B cell (primary cell): ENCODE measurements at regions of chr14 and their contacts with region 1.

Region 1: GRCh38 chr14:22872033-22872832 is 693 bp downstream of the LRP10 start:
- DNase-seq: peak; percentile 83
- ATAC-seq: peak; percentile 22
- H3K4me3 ChIP-seq: peak overlapping the region; percentile 79 to 97 (median 92)
- H3K4me3 Mint-ChIP-seq: peak overlapping the region; percentile 96
- H3K27ac ChIP-seq: peak overlapping the region; percentile 84 to 88
- H3K27ac Mint-ChIP-seq: peak overlapping the region; percentile 98
- H3K4me1 ChIP-seq: peaks cover 19 to 35% of the 10 kb centered on the region in 2 donors
- H3K4me1 Mint-ChIP-seq: peaks cover 34% of the 10 kb centered on the region
- H3K27me3 ChIP-seq: no peaks in the 10 kb centered on the region
- H3K27me3 Mint-ChIP-seq: no peaks in the 10 kb centered on the region
- CTCF ChIP-seq: peak; percentile 90

Region 2: DNA sequence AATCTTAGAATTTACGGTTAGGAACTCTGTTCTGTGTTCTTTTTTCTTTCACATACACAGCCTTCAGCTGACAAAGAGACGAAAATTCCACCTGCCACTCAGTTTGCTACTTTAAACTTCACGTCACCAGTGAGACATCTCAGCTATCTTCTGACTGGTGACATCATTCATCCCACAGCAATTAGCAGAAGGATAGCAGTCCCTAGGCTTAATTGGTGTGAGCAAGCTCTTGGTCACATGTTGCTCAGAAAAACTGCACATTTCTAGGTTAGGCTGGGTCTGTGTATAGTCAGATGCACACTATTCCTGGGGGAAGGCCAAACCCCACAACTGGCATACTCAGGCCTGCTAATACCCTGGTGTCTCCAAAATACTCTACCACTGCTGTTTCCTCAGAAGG is 80.9 kb before region 1 on chr14:
- CTCF ChIA-PET with region 1: no interaction called
- POLR2A ChIA-PET with region 1: interaction called, 4 read pairs
- intact Hi-C with region 1: loop called (anchors 1 kb)
- DNase-seq: peak; percentile 31
- ATAC-seq: no peak
- H3K4me3 ChIP-seq: no peak overlapping the region
- H3K4me3 Mint-ChIP-seq: peak overlapping the region; percentile 43
- H3K27ac ChIP-seq: peak overlapping the region; percentile 75 to 84
- H3K27ac Mint-ChIP-seq: peak overlapping the region; percentile 78
- H3K4me1 ChIP-seq: peaks cover 43 to 51% of the 10 kb centered on the region in 2 donors
- H3K4me1 Mint-ChIP-seq: peaks cover 59% of the 10 kb centered on the region
- H3K27me3 ChIP-seq: no peaks in the 10 kb centered on the region
- H3K27me3 Mint-ChIP-seq: no peaks in the 10 kb centered on the region
- CTCF ChIP-seq: no peak

Region 3: DNA sequence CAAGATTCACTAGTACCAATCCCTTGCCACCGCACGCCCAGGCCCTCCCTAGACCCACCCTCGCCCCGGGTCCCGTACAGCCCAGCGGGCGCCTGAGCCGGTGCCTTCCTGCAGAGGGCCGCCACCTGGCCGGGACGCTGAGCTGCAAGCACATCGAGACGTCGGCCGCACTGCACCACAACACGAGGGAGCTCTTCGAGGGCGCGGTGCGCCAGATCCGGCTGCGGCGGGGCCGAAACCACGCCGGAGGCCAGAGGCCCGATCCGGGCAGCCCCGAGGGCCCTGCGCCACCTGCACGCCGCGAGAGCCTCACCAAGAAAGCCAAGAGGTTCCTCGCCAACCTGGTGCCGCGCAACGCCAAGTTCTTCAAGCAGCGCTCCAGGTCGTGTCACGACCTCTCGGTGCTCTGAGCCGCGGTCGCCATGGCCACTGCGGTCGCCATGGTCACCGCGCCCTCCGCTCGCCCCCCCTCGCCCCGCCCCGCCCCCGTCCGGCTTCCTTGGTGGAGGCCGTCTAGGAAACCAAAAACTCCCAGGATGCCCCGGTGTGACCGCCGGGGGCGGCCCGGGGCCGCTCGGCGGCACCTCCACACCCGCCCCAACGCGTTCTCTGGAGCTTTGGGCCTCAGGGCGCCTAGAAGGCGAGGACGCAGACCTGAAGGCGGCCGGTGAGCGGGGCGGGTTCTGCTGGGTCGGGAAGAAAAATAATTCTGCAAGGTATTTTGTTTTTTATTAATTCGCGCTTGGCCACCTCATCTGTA is 14.4 kb after region 1 on chr14:
- CTCF ChIA-PET with region 1: interaction called, 101 read pairs
- POLR2A ChIA-PET with region 1: interaction called, 61 read pairs
- intact Hi-C with region 1: loop called (anchors 1 kb)
- DNase-seq: peak; percentile 89
- ATAC-seq: peak; percentile 62
- H3K4me3 ChIP-seq: peak overlapping the region; percentile 44 to 83 (median 67)
- H3K4me3 Mint-ChIP-seq: peak overlapping the region; percentile 97
- H3K27ac ChIP-seq: peak overlapping the region; percentile 85 to 94
- H3K27ac Mint-ChIP-seq: peak overlapping the region; percentile 99
- H3K4me1 ChIP-seq: peaks cover 55 to 83% of the 10 kb centered on the region in 2 donors
- H3K4me1 Mint-ChIP-seq: peaks cover 71% of the 10 kb centered on the region
- H3K27me3 ChIP-seq: no peaks in the 10 kb centered on the region
- H3K27me3 Mint-ChIP-seq: no peaks in the 10 kb centered on the region
- CTCF ChIP-seq: peak; percentile 42

Region 4: DNA sequence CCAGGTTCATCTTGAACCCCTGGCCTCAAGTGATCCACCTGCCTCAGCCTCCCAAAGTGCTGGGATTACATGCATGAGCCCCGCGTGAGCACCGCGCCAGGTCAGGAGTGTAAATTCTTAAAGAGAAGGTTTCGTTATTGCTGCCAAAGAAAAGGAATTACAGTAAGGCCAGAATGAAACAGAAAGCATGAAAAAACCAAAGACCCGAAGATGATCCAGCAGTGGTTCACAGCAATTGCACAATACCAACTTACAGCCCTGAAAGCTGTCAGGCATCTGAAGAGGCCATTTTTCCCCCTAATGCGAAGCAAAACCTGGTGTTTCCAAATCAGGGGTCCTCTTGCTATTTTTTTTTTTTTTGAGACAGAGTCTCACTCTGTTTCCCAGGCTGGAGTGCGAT is 36.4 kb after region 1 on chr14:
- CTCF ChIA-PET with region 1: interaction called, 111 read pairs
- POLR2A ChIA-PET with region 1: no interaction called
- intact Hi-C with region 1: no loop called
- DNase-seq: no peak
- ATAC-seq: no peak
- H3K4me3 ChIP-seq: no peak overlapping the region
- H3K4me3 Mint-ChIP-seq: no peak overlapping the region
- H3K27ac ChIP-seq: no peak overlapping the region
- H3K27ac Mint-ChIP-seq: no peak overlapping the region
- H3K4me1 ChIP-seq: no peaks in the 10 kb centered on the region
- H3K4me1 Mint-ChIP-seq: peaks cover 12% of the 10 kb centered on the region
- H3K27me3 ChIP-seq: no peaks in the 10 kb centered on the region
- H3K27me3 Mint-ChIP-seq: no peaks in the 10 kb centered on the region
- CTCF ChIP-seq: no peak

Region 5: GRCh38 chr14:22929104-22929847 is 57.0 kb after region 1 on chr14 and contains the start of gene PRMT5:
- CTCF ChIA-PET with region 1: interaction called, 10 read pairs
- POLR2A ChIA-PET with region 1: no interaction called
- intact Hi-C with region 1: no loop called
- DNase-seq: peak; percentile 100
- ATAC-seq: peak; percentile 94
- H3K4me3 ChIP-seq: peak within 1 kb of the TSS; percentile 64 to 100 (median 96)
- H3K4me3 Mint-ChIP-seq: no peak within 1 kb of the TSS
- H3K27ac ChIP-seq: peak within 1 kb of the TSS; percentile 65 to 86
- H3K27ac Mint-ChIP-seq: no peak within 1 kb of the TSS
- H3K4me1 ChIP-seq: peaks cover 13 to 23% of the 10 kb centered on the region in 2 donors
- H3K4me1 Mint-ChIP-seq: peaks cover 26% of the 10 kb centered on the region
- H3K27me3 ChIP-seq: no peaks in the 10 kb centered on the region
- H3K27me3 Mint-ChIP-seq: no peaks in the 10 kb centered on the region
- CTCF ChIP-seq: no peak
- total RNA-seq, gene PRMT5: 38.8 and 48.6 TPM in 2 replicates